ENCODE measurements at regions of chr6 and their contacts with region 1.

Region 1: DNA sequence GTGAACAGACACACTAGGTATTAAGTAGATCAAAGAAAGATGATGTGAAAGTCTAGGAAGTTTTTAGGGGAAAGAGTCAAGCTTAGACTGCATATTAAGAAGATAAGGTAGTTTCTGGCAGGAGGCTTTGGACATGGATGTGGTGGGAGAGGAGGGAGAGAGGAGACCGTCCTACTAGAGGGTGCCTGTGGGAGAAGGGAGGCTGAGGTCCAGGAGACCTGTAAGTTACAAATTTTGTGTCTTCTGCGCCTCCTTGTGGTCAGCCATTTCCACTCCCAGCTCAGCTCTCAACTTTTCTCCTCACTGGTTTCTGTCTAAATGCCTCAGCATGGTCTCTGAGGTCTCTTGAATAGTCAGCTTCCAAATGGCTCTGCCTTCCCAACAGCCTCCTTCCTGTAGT is 193.5 kb downstream of the UNC5CL start:
- DNase-seq: no peak
- ATAC-seq: no peak
- H3K4me3 Mint-ChIP-seq: no peak overlapping the region
- H3K27ac Mint-ChIP-seq: no peak overlapping the region
- H3K4me1 Mint-ChIP-seq: no peaks in the 10 kb centered on the region
- H3K27me3 Mint-ChIP-seq: peaks cover 17% of the 10 kb centered on the region
- CTCF ChIP-seq: no peak

Region 2: DNA sequence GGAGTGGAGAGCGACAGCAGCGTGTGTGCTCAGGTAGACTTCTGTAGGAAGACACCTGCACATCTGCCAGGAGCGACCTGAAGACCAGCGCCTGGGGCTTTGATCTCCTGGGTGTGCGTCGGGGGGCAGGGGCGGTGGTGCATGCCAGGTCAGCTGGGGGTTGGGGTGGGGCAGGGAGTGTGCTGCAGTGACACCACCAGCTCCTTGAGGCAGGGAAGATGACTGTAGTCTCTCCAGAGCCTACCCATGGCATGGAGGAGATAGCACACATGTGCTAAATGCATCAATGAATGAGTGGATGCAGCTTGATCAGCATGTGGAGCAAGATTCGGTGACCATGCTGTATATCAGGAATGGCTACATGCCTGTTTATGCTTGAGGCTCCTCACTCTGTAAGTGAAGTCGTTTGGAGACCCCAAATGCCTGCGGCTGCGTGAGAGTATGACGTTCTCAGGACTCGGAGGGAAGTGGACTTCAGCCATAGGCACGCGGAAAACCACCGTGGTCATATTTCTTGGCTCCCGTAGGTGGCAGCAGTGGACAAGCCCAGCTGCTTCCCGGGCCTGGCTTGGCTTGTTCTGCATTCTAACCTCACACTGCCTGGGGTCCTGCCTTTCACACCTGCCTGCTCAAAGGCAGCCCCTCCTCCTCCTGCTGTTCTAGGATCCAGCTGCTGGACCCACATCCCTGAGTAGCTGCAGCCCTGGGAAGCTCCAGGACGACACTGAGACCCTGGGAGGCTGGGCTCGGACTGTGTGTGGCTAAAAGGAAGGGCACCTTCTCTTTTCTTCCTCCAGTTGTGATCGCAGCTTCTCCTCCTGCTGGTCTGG is 1483.7 kb before region 1 on chr6:
- CTCF ChIA-PET with region 1: no interaction called
- POLR2A ChIA-PET with region 1: no interaction called
- intact Hi-C with region 1: loop called (anchors 1 kb)
- DNase-seq: peak; percentile 33
- ATAC-seq: peak; percentile 75
- H3K4me3 Mint-ChIP-seq: no peak overlapping the region
- H3K27ac Mint-ChIP-seq: no peak overlapping the region
- H3K4me1 Mint-ChIP-seq: peaks cover 2% of the 10 kb centered on the region
- H3K27me3 Mint-ChIP-seq: peaks cover 7% of the 10 kb centered on the region
- CTCF ChIP-seq: no peak

Region 3: GRCh38 chr6:39980839-39981580 is 864.5 kb before region 1 on chr6:
- CTCF ChIA-PET with region 1: no interaction called
- POLR2A ChIA-PET with region 1: no interaction called
- intact Hi-C with region 1: loop called (anchors 5 kb)
- DNase-seq: no peak
- ATAC-seq: no peak
- H3K4me3 Mint-ChIP-seq: no peak overlapping the region
- H3K27ac Mint-ChIP-seq: no peak overlapping the region
- H3K4me1 Mint-ChIP-seq: no peaks in the 10 kb centered on the region
- H3K27me3 Mint-ChIP-seq: peaks cover 21% of the 10 kb centered on the region
- CTCF ChIP-seq: no peak

Region 4: GRCh38 chr6:40328405-40328987 is 517.1 kb before region 1 on chr6:
- CTCF ChIA-PET with region 1: no interaction called
- POLR2A ChIA-PET with region 1: no interaction called
- intact Hi-C with region 1: loop called (anchors 2 kb)
- DNase-seq: no peak
- ATAC-seq: no peak
- H3K4me3 Mint-ChIP-seq: no peak overlapping the region
- H3K27ac Mint-ChIP-seq: no peak overlapping the region
- H3K4me1 Mint-ChIP-seq: no peaks in the 10 kb centered on the region
- H3K27me3 Mint-ChIP-seq: peaks cover 20% of the 10 kb centered on the region
- CTCF ChIP-seq: no peak

Region 5: DNA sequence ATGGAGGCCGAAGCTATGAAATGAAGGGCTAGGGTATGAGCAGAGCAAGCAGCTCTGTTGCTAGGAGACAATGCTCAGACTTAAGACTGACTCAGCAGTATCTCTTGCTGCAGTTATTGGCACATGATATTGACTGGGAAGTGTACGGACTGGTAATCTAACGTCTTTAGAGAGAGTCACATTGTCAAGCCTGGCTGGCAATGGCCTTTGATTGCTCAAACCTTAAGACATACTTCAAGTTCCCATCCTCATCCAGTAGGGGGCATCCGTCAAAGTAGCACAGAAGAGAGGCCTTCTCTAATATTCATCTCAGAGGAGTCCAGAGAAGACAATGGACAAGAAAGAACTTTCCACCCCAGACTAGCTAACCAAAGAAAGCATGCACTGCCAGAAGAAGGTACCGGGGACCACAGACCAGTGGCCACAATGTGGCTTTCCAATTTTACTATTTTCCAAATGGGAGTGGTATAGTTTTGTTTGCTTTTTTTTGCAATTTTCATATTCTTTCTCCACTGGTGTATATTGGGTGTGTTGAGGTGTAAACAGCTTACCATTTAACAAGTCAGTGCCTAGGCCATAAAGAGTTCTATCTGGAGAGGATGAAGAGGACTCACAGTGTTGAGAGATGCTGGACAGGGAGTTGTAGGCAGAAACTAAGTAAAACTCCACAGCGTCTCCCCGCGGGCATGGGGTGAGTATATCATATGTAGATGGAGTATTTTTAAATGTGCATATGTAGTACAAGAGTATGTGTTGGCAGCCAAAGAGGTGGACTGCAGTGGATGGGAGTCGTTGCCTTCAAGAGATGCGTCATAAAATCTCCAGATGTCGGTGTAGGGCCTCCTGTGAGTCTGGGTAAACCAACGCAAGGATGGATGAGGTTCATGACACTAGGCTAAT is 295.1 kb before region 1 on chr6:
- CTCF ChIA-PET with region 1: no interaction called
- POLR2A ChIA-PET with region 1: no interaction called
- intact Hi-C with region 1: loop called (anchors 2 kb)
- DNase-seq: no peak
- ATAC-seq: no peak
- H3K4me3 Mint-ChIP-seq: no peak overlapping the region
- H3K27ac Mint-ChIP-seq: no peak overlapping the region
- H3K4me1 Mint-ChIP-seq: no peaks in the 10 kb centered on the region
- H3K27me3 Mint-ChIP-seq: peaks cover 5% of the 10 kb centered on the region
- CTCF ChIP-seq: no peak

Region 6: DNA sequence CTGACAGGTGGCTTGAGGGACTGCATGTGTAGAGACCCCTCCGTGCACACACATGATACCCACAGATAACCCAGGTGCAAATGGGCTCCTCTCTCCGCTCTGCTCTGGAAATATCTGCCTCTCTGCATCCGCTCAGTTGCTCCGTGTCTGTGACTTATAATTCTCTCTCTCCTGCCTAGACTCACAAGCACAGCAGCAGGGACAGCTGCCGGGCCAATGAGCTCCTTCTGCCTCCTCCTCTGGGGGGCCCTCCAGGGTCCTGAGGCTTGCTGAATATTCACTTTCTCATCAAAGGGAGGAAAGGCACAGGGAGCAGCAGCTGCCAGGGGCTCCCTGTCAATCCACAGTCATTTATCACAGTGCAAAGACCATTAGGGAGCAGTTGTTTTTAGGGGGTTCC is 282.4 kb before region 1 on chr6:
- CTCF ChIA-PET with region 1: no interaction called
- POLR2A ChIA-PET with region 1: no interaction called
- intact Hi-C with region 1: no loop called
- DNase-seq: no peak
- ATAC-seq: no peak
- H3K4me3 Mint-ChIP-seq: no peak overlapping the region
- H3K27ac Mint-ChIP-seq: no peak overlapping the region
- H3K4me1 Mint-ChIP-seq: no peaks in the 10 kb centered on the region
- H3K27me3 Mint-ChIP-seq: no peaks in the 10 kb centered on the region
- CTCF ChIP-seq: no peak

Region 7: GRCh38 chr6:40796260-40797221 is 49.0 kb before region 1 on chr6:
- CTCF ChIA-PET with region 1: no interaction called
- POLR2A ChIA-PET with region 1: no interaction called
- intact Hi-C with region 1: no loop called
- DNase-seq: no peak
- ATAC-seq: no peak
- H3K4me3 Mint-ChIP-seq: no peak overlapping the region
- H3K27ac Mint-ChIP-seq: no peak overlapping the region
- H3K4me1 Mint-ChIP-seq: no peaks in the 10 kb centered on the region
- H3K27me3 Mint-ChIP-seq: peaks cover 6% of the 10 kb centered on the region
- CTCF ChIP-seq: no peak

Region 8: DNA sequence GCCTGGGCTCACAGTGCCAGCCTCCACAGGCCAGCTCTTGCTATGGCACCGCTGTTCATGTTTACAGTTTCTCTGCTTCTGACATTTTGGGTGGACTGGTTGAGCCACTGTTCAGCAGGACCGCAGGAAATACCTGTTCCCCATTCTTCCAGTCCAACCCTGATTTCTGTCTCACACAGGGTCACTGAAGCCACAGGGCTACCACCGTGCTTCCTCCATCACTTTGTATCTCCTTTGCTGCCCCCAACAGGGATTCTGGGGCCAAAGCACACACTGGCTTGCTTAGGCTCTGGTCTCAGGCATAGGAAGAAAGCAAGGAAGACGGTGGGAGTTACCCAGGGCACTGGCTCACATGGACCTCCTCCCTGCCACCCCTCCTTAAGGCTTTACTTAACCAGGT is 28.9 kb after region 1 on chr6:
- CTCF ChIA-PET with region 1: no interaction called
- POLR2A ChIA-PET with region 1: no interaction called
- intact Hi-C with region 1: no loop called
- DNase-seq: no peak
- ATAC-seq: no peak
- H3K4me3 Mint-ChIP-seq: no peak overlapping the region
- H3K27ac Mint-ChIP-seq: no peak overlapping the region
- H3K4me1 Mint-ChIP-seq: no peaks in the 10 kb centered on the region
- H3K27me3 Mint-ChIP-seq: peaks cover 20% of the 10 kb centered on the region
- CTCF ChIP-seq: no peak

Measured in activated B cell treated with CpG ODN at 0.5 μM for 24 hours (primary cell).